ENCODE measurements at regions of chr19 and their contacts with region 1.

Region 1: GRCh38 chr19:29844891-29845572 is 33.2 kb downstream of the CCNE1 start:
- DNase-seq: peak; percentile 96
- H3K4me3 ChIP-seq: peak overlapping the region; percentile 64 to 77
- H3K27ac ChIP-seq: peak overlapping the region; percentile 77 to 89
- H3K4me1 ChIP-seq: peaks cover 15% of the 10 kb centered on the region
- H3K27me3 ChIP-seq: no peaks in the 10 kb centered on the region
- CTCF ChIP-seq: no peak
- POLR2A ChIP-seq: no peak

Region 2: DNA sequence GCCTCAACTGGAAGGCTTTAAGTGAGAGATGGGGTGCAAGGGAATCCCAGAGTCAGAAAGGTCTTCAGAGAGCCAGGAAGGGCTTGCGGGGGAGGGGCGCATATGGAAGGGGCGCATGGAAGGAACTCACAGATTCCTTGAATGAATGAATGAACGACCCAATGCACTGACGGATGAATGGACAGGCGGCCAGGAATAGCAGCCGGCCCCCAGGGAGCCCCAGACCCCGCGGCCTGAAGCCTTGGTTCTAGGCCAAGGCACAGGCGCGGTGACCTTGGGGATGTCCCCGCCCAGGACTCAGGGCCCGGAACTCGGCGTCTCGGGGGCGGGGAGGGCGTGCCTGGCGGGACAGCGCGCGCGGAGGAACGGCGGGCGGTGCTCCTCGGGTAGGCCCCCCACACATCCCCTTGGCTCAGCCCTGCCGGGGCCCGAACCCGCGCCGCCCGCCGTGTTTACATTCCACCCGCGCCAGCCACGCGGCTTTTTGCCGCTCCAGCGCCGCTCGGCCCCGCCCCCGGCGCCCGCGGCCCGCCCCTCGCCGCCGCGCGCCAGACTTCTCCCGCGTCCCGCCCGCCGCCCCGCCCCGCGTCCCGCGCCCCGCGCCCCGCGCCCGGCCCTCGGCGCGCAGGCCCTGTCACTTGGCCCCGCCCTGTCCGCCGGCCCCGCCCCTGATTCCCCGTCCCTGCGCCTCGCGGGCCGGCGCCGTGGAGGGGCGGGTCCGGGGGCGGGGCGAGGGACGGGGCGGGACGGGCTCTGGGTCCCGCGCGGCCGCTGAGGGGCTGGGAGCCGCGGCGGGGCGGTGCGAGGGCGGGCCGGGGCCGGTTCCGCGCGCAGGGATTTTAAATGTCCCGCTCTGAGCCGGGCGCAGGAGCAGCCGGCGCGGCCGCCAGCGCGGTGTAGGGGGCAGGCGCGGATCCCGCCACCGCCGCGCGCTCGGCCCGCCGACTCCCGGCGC is 33.6 kb before region 1 on chr19 and contains the start of gene CCNE1:
- intact Hi-C with region 1: loop called (anchors 5 kb)
- DNase-seq: peak; percentile 94
- H3K4me3 ChIP-seq: peak within 1 kb of the TSS; percentile 64 to 66
- H3K27ac ChIP-seq: peak within 1 kb of the TSS; percentile 37 to 59
- H3K4me1 ChIP-seq: peaks cover 10% of the 10 kb centered on the region
- H3K27me3 ChIP-seq: no peaks in the 10 kb centered on the region
- CTCF ChIP-seq: no peak
- POLR2A ChIP-seq: no peak
- total RNA-seq, gene CCNE1: 16.3 to 17.6 TPM